ENCODE measurements at regions of chr18 and their contacts with region 1.

Region 1: DNA sequence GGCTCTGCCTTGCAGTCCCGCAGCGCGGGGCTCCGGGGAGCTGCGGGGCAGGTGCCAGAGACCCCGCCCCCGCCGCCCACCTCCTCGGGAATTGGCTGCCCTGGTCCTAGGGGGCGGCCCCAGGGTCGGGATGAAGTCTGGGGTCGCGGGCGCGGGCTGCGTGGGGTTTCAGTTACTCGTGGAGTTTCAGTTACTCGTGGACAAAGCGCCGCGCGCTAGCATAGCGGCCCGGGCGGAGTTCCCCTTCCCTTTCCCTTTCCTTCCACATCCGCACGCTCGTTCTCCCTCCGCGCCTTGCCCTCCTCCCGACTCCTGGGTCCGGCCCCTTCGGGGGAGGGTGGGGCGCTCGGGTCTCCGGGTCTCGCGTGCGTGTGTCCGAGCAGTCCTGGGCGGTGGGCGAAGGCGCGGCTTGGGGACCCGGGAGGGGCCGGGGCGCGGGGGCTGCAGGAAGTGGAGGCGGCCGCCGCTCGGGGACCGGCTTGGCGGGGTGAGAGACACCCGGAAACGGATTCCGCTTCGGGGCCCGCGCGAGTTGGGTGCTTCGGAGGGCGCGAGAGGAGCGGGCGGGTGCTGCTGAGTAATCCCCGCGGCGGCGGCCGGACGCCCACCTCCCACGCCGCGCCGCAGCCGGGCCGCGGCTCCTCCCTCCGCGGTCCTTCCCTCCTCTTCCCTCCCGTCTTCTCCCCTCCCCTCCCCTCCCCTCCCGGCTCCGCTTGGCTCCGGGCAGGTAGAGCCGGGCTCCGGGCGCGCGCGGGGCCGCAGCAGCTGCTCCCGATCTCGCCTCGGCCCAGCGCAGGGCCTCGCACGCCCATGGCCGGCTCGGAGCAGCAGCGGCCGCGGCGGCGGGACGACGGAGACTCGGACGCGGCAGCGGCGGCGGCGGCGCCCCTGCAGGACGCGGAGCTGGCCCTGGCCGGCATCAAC is at the start of gene TTC39C:
- DNase-seq: peak; percentile 81
- H3K4me3 ChIP-seq: peak within 1 kb of the TSS; percentile 86
- H3K27ac ChIP-seq: peak within 1 kb of the TSS; percentile 55
- H3K4me1 ChIP-seq: peaks cover 81% of the 10 kb centered on the region
- CTCF ChIP-seq: no peak
- total RNA-seq, gene TTC39C: 31.4 and 33.4 TPM in 2 replicates

Region 2: GRCh38 chr18:23503038-23503962 is 511.0 kb before region 1 on chr18 and contains the start of gene RMC1:
- CTCF ChIA-PET with region 1: no interaction called
- POLR2A ChIA-PET with region 1: no interaction called
- intact Hi-C with region 1: loop called (anchors 5 kb)
- DNase-seq: peak; percentile 96
- H3K4me3 ChIP-seq: peak within 1 kb of the TSS; percentile 96
- H3K27ac ChIP-seq: peak within 1 kb of the TSS; percentile 72
- H3K4me1 ChIP-seq: peaks cover 40% of the 10 kb centered on the region
- CTCF ChIP-seq: peak; percentile 58
- total RNA-seq, gene RMC1: 28.4 and 32.8 TPM in 2 replicates

Region 3: DNA sequence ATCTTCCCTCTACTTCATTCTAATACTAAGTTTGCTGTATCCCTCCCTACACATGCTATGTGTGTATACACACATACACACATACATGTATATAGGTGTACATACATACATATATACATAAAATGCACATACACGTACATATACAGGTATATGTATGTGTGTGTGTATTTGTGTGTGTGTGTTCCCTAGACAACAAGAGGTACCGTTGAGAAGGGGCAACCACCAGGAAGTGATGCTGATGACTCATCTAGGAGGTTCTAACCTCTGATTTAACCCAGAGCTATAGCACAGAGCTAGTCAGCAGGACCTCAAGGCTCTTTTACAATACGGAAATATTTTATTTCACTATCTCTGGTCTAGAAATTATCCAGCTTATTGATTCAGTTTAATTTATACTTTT is 185.9 kb before region 1 on chr18:
- CTCF ChIA-PET with region 1: no interaction called
- POLR2A ChIA-PET with region 1: no interaction called
- intact Hi-C with region 1: loop called (anchors 5 kb)
- DNase-seq: peak; percentile 53
- H3K4me3 ChIP-seq: no peak overlapping the region
- H3K27ac ChIP-seq: no peak overlapping the region
- H3K4me1 ChIP-seq: peaks cover 14% of the 10 kb centered on the region
- CTCF ChIP-seq: no peak

Region 4: DNA sequence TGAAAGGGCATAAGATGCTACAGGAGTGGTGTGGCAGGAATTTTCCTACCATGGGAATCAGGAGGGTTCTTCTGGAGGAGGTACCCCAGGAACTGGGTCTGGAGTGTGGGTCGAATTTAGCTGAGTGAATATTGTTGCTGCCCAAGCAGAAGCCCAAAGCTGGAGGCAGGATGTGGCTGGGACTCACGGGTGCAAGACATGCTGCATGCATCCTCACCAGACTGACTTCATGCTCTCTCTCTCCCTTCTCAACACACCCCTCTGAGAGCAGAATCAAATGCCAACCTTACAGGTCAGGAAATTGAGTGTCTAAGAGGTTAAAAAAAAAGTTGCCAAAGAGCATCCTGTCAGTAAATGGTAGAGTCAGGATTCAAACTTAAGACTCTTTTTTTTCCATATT is 78.5 kb before region 1 on chr18:
- CTCF ChIA-PET with region 1: no interaction called
- POLR2A ChIA-PET with region 1: interaction called, 7 read pairs
- intact Hi-C with region 1: loop called (anchors 2 kb)
- DNase-seq: peak; percentile 35
- H3K4me3 ChIP-seq: no peak overlapping the region
- H3K27ac ChIP-seq: no peak overlapping the region
- H3K4me1 ChIP-seq: peaks cover 37% of the 10 kb centered on the region
- CTCF ChIP-seq: no peak

Region 5: GRCh38 chr18:24488824-24489493 is 474.6 kb after region 1 on chr18:
- CTCF ChIA-PET with region 1: no interaction called
- POLR2A ChIA-PET with region 1: no interaction called
- intact Hi-C with region 1: loop called (anchors 5 kb)
- DNase-seq: peak; percentile 67
- H3K4me3 ChIP-seq: no peak overlapping the region
- H3K27ac ChIP-seq: peak overlapping the region; percentile 8
- H3K4me1 ChIP-seq: peaks cover 44% of the 10 kb centered on the region
- CTCF ChIP-seq: peak; percentile 90

Measured in OCI-LY7 (cell line).